ENCODE measurements at regions of chr16 and their contacts with region 1.

Region 1: DNA sequence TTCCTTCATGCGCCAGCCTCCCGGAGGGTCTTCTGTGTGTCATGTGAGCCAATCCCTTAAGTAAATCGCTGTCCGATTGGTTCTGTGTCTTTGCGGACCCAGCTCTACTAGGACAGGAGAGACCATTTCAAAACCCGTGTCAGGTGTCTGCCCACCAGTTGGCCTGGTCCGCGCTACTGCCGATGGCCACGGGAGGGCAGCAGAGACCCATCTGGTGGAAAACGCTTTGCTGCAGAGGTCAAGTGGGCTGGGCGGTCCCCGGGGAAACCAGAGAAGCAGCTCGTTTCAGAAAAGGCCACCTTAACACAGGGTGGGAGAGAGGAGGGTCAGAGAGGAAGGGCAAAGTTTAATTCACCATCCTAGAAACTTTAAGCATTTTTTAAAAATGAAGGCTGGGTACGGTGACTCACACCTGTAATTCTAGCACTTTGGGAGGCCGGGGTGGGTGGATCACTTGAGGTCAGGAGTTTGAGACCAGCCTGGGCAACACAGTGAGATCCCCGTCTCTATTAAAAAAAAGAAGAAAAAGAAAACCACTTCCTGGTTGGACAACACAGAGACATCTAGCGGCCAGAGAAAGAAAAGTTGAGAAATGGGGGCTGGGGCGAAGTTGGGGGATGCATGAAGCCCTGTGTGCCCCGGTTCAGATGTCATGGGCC is 2.8 kb upstream of the CIBAR2 start:
- DNase-seq: peak; percentile 48 to 68 (median 61)
- H3K4me3 ChIP-seq: peak overlapping the region in 1 of 2 donors; percentile 6
- H3K4me3 Mint-ChIP-seq: peak overlapping the region; percentile 48 to 89 (median 80)
- H3K27ac ChIP-seq: no peak overlapping the region
- H3K27ac Mint-ChIP-seq: peak overlapping the region in 6 of 7 donors; percentile 19 to 85 (median 82)
- H3K4me1 ChIP-seq: peaks cover 9% of the 10 kb centered on the region
- H3K4me1 Mint-ChIP-seq: peaks cover 3 to 13% (median 9%) of the 10 kb centered on the region in 4 donors
- H3K27me3 ChIP-seq: no peaks in the 10 kb centered on the region
- H3K27me3 Mint-ChIP-seq: no peaks in the 10 kb centered on the region

Region 2: DNA sequence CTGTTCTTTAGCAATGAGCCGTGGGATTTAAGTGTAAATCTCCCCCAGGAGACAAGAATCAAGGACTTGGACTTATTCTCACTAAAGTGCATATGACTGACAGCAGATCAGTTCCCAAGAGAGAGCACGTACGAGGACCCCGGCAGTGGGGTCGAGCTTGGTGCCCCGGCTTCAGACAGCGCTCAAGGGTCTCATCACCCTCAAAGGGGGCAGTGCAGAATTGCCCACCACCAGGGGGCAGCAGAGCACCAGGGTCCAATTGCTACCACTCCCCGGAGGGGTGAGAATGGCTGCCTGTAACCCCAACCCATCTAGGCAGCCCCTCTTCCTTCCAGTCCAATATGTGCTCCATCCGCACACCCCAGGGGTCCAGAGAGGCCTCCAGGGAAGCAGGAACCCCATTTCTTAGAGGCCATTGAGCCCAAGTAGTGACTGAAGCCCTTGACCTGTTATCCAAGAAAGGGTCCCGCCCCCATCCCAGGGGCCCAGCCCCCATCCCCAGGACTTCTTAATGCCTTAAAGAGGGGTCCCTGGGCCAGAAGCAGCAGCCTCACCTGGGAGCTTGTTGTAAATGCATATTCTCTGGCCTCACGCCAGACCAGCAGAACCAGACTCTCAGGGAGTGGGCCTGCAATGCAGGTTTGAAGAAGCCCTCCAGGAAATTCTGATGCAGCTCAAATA is 189.8 kb before region 1 on chr16:
- CTCF ChIA-PET with region 1: no interaction called
- POLR2A ChIA-PET with region 1: no interaction called
- intact Hi-C with region 1: no loop called
- DNase-seq: peak; percentile 49 to 56 (median 55)
- H3K4me3 ChIP-seq: no peak overlapping the region
- H3K4me3 Mint-ChIP-seq: no peak overlapping the region
- H3K27ac ChIP-seq: no peak overlapping the region
- H3K27ac Mint-ChIP-seq: no peak overlapping the region
- H3K4me1 ChIP-seq: peaks cover 2% of the 10 kb centered on the region
- H3K4me1 Mint-ChIP-seq: peaks cover 0 to 3% (median under 1%) of the 10 kb centered on the region in 4 donors
- H3K27me3 ChIP-seq: no peaks in the 10 kb centered on the region
- H3K27me3 Mint-ChIP-seq: peaks cover 0 to 2% of the 10 kb centered on the region in 2 donors

Region 3: DNA sequence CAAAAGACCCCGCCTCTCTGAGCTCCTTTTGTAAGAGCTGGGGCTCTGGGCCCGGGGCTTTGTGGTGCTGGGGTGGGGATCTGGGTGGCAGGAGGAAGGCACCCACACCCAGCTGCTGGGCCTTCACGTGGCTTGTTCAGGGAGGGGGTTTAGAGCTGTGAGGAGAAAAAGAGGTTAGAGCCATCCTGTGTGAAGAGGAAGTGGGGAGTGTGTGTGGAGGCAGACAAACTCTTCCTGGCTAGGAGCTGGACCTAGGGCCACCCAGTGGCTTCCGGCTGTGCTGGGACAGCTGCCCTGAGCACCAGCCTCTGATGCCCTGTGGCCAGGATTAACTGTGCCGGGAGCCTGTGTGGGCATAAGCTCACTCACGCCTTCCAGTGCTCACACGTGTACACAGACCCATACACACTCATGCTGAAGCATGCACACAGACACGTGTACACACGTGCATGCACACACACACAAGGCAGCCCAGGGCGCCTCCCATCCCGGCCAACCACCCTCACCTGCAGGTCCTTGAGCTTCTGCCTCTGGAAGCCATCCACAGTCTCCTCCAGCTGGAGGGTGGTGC is 10.1 kb before region 1 on chr16:
- CTCF ChIA-PET with region 1: interaction called, 26 read pairs
- POLR2A ChIA-PET with region 1: interaction called, 4 read pairs
- intact Hi-C with region 1: no loop called
- DNase-seq: peak; percentile 27 to 56 (median 44)
- H3K4me3 ChIP-seq: no peak overlapping the region
- H3K4me3 Mint-ChIP-seq: peak overlapping the region in 7 of 8 donors; percentile 52 to 74 (median 65)
- H3K27ac ChIP-seq: no peak overlapping the region
- H3K27ac Mint-ChIP-seq: peak overlapping the region; percentile 48 to 91 (median 83)
- H3K4me1 ChIP-seq: peaks cover 41% of the 10 kb centered on the region
- H3K4me1 Mint-ChIP-seq: peaks cover 20 to 49% (median 32%) of the 10 kb centered on the region in 4 donors
- H3K27me3 ChIP-seq: no peaks in the 10 kb centered on the region
- H3K27me3 Mint-ChIP-seq: peaks cover 0 to 2% of the 10 kb centered on the region in 2 donors

Measured in CD4-positive, alpha-beta memory T cell (primary cell).